Activated CD4-positive, alpha-beta memory T cell treated with anti-CD3 and anti-CD28 coated beads for 36 hours (primary cell): ENCODE measurements at regions of chr1 and their contacts with region 1.

Region 1: GRCh38 chr1:24694380-24694843 is 50.8 kb upstream of the CLIC4 start:
- DNase-seq: no peak
- H3K4me3 Mint-ChIP-seq: no peak overlapping the region
- H3K27ac Mint-ChIP-seq: no peak overlapping the region
- H3K4me1 Mint-ChIP-seq: peaks cover 1% of the 10 kb centered on the region
- H3K27me3 Mint-ChIP-seq: peaks cover 3% of the 10 kb centered on the region

Region 2: GRCh38 chr1:24744911-24745710 is 50.7 kb after region 1 on chr1 and contains the start of gene CLIC4:
- CTCF ChIA-PET with region 1: interaction called, 10 read pairs
- POLR2A ChIA-PET with region 1: no interaction called
- intact Hi-C with region 1: loop called (anchors 10 kb)
- DNase-seq: peak; percentile 100
- H3K4me3 Mint-ChIP-seq: peak within 1 kb of the TSS; percentile 76
- H3K27ac Mint-ChIP-seq: peak within 1 kb of the TSS; percentile 58
- H3K4me1 Mint-ChIP-seq: peaks cover 34% of the 10 kb centered on the region
- H3K27me3 Mint-ChIP-seq: no peaks in the 10 kb centered on the region
- total RNA-seq, gene CLIC4: 25.5 to 26.3 TPM